ENCODE measurements at regions of chr6 and their contacts with region 1.

Region 1: DNA sequence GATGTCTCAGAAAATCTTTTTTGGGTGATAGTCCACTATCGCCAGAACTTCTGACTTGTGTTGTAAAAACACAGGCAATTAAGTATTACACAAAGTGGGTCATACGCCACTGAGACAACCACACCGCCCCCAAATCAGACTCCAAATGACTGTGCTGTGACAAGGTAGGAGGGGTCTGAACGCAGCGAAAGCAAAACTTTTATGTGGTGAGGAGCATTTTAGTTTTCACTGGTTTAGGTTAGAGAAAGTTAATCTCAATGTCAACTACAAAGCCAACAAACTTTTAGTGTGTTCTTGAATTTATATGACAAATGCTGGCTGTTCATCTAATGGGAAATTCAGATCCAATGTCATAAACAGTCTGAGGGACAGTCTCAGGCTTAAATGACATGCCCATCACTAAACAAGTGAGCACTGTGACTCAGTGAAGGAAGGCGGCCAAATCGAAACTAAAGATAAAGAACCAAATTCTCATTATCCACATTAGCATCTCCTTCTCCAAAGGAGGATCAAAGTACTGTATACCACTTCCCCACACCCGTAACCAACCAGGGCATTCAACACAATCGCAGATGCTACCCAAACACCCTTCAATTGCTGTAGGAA is 186.7 kb downstream of the GJA10 start:
- DNase-seq: peak; percentile 92
- ATAC-seq: peak; percentile 62
- H3K4me3 Mint-ChIP-seq: peak overlapping the region; percentile 93
- H3K27ac Mint-ChIP-seq: peak overlapping the region; percentile 99
- H3K4me1 Mint-ChIP-seq: peaks cover 83% of the 10 kb centered on the region
- H3K27me3 Mint-ChIP-seq: no peaks in the 10 kb centered on the region

Region 2: DNA sequence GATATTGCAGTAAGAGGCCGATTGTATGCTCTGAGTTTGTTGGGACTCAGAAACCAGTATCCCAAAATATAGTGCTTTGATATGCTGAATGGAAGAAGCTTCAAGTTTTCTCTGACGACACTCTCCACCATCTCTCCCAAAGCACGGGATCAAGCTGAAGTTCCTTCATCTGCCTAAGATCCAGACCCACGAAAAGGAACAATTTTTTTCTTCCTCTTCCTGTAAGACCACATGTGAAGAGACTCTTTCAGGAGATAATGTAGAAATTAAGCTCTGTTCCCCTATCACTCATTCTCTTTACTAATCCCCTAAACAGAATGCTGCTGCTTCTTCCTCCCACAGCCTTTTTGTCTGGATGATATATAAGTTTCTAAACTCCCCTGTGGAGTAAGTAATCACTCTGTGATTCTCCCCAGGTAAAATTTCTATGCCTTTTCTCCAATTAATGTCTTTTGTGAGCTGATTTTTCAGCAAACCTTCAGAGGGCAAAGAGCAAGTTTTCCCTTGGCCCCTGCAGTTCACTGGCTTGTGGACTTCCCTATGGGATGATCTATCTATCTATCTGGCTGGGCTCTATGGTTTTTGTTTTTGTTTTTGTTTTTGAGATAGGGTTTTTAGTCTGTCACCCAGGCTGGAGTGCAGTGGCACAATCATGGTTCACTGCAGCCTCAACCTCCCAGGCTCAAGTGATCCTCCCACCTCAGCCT is 1013.9 kb before region 1 on chr6:
- CTCF ChIA-PET with region 1: no interaction called
- POLR2A ChIA-PET with region 1: no interaction called
- intact Hi-C with region 1: no loop called
- DNase-seq: no peak
- ATAC-seq: no peak
- H3K4me3 Mint-ChIP-seq: no peak overlapping the region
- H3K27ac Mint-ChIP-seq: no peak overlapping the region
- H3K4me1 Mint-ChIP-seq: no peaks in the 10 kb centered on the region
- H3K27me3 Mint-ChIP-seq: no peaks in the 10 kb centered on the region

Region 3: GRCh38 chr6:89352278-89353117 is 728.5 kb before region 1 on chr6 and contains the start of gene UBE2J1:
- CTCF ChIA-PET with region 1: no interaction called
- POLR2A ChIA-PET with region 1: no interaction called
- intact Hi-C with region 1: loop called in 1 of 2 experiments (anchors 10 kb)
- DNase-seq: peak; percentile 85
- ATAC-seq: peak; percentile 84
- H3K4me3 Mint-ChIP-seq: peak within 1 kb of the TSS; percentile 91
- H3K27ac Mint-ChIP-seq: peak within 1 kb of the TSS; percentile 97
- H3K4me1 Mint-ChIP-seq: peaks cover 74% of the 10 kb centered on the region
- H3K27me3 Mint-ChIP-seq: no peaks in the 10 kb centered on the region
- total RNA-seq, gene UBE2J1: 18.7 to 21.7 TPM

Region 4: GRCh38 chr6:89952686-89953085 is 128.3 kb before region 1 on chr6:
- CTCF ChIA-PET with region 1: interaction called, 5 read pairs
- POLR2A ChIA-PET with region 1: interaction called, 10 read pairs
- intact Hi-C with region 1: loop called (anchors 1 to 2 kb)
- DNase-seq: peak; percentile 66
- ATAC-seq: peak; percentile 60
- H3K4me3 Mint-ChIP-seq: no peak overlapping the region
- H3K27ac Mint-ChIP-seq: peak overlapping the region; percentile 79
- H3K4me1 Mint-ChIP-seq: peaks cover 75% of the 10 kb centered on the region
- H3K27me3 Mint-ChIP-seq: no peaks in the 10 kb centered on the region

Region 5: DNA sequence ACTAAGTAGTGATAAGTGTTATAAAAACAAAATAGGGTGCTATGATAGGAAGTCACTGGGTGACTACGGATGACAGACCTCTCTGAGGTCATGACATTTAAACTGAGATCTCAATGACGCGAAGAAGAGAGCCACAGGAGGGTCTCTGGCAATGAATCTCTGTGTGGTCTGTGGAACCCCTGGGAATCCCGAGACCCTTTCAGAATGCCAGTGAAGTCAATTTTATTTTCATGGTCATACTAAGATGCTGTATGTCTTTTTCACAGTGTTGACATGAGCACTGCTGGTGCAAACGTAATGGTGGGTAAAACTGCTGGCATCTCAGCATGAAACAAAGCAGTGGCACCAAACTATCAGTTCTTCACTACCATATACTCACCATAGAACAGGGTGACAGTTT is 31.7 kb before region 1 on chr6:
- CTCF ChIA-PET with region 1: interaction called, 3 read pairs
- POLR2A ChIA-PET with region 1: interaction called, 5 read pairs
- intact Hi-C with region 1: loop called (anchors 1 to 2 kb)
- DNase-seq: peak; percentile 30
- ATAC-seq: peak; percentile 56
- H3K4me3 Mint-ChIP-seq: peak overlapping the region; percentile 35
- H3K27ac Mint-ChIP-seq: peak overlapping the region; percentile 89
- H3K4me1 Mint-ChIP-seq: peaks cover 58% of the 10 kb centered on the region
- H3K27me3 Mint-ChIP-seq: no peaks in the 10 kb centered on the region

Region 6: DNA sequence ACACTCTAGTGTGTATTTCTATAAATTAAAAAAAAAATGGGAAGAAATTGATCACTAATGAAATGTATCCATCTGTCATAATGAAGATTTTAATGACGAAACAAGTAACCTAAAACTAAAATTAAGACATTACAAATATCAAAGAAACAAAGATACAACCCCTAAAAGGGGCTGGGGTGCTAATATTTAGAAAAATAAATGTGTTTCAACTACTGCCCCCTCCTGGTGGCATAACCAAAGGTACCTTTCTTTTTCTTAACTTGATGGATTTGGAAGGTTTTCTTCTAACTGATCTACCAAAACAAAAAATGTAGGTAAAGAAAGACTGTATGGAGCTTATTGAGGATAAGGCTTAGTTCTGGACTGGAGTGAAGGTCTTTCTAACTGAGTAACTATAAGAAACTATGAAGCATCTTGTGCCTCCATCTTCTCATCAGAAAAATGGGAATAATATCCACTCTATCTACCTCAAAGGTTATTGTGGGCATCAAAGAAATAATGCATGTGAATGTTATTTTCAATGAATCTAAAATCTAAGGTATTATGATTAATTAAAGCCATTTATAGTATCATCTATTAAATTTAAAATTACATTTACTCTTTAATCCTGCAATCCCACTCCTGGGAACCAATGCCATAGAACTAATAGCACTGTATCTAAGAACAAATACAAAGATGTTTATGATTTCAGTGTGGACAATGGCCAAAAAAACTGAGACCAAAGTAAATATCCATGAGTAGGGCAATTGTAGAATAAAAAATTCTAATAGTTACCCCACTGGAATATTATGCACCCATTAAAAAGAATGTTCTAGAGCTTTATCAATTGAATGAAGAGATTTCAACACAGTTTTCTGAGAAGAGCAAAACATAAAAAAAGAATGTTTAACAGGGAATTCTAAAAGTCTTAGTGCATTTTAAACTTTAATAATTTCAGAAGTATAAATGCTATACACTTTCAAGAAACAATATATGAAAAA is 98.5 kb after region 1 on chr6:
- CTCF ChIA-PET with region 1: interaction called, 3 read pairs
- POLR2A ChIA-PET with region 1: interaction called, 4 read pairs
- intact Hi-C with region 1: loop called (anchors 1 to 2 kb)
- DNase-seq: peak; percentile 46
- ATAC-seq: no peak
- H3K4me3 Mint-ChIP-seq: no peak overlapping the region
- H3K27ac Mint-ChIP-seq: no peak overlapping the region
- H3K4me1 Mint-ChIP-seq: peaks cover 79% of the 10 kb centered on the region
- H3K27me3 Mint-ChIP-seq: no peaks in the 10 kb centered on the region

Region 7: GRCh38 chr6:90274451-90275030 is 193.6 kb after region 1 on chr6:
- CTCF ChIA-PET with region 1: interaction called, 3 read pairs
- POLR2A ChIA-PET with region 1: interaction called, 3 read pairs
- intact Hi-C with region 1: loop called (anchors 1 kb)
- DNase-seq: peak; percentile 96
- ATAC-seq: peak; percentile 89
- H3K4me3 Mint-ChIP-seq: peak overlapping the region; percentile 54
- H3K27ac Mint-ChIP-seq: peak overlapping the region; percentile 90
- H3K4me1 Mint-ChIP-seq: peaks cover 95% of the 10 kb centered on the region
- H3K27me3 Mint-ChIP-seq: no peaks in the 10 kb centered on the region

Region 8: DNA sequence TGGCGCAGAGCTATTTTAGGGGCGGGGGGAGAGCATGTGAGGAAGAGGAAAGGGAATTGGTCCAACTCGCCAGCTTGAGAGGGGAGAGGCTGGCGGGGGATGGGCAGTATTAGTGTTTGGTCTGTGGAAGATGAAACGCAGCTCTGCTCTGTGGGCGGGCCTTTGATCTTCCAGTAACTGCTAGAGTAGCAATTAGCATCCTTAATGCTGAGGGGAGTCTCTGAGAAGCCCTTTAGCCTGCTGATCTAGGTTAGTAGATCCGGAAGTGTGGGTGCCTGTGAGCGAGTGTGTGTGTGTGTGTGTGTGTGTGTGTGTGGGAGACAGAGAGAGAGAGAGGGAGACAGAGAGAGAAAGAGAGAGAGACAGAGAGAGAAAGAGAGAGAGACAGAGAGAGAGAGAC is 332.9 kb after region 1 on chr6:
- CTCF ChIA-PET with region 1: no interaction called
- POLR2A ChIA-PET with region 1: no interaction called
- intact Hi-C with region 1: loop called (anchors 5 kb)
- DNase-seq: peak; percentile 91
- ATAC-seq: peak; percentile 51
- H3K4me3 Mint-ChIP-seq: peak overlapping the region; percentile 67
- H3K27ac Mint-ChIP-seq: peak overlapping the region; percentile 93
- H3K4me1 Mint-ChIP-seq: peaks cover 72% of the 10 kb centered on the region
- H3K27me3 Mint-ChIP-seq: no peaks in the 10 kb centered on the region